ENCODE measurements at regions of chr7 and their contacts with region 1.

Region 1: GRCh38 chr7:112495810-112496462 is 15.1 kb downstream of the LSMEM1 start:
- DNase-seq: no peak
- H3K4me3 ChIP-seq: no peak overlapping the region
- H3K27ac ChIP-seq: no peak overlapping the region
- H3K27me3 ChIP-seq: no peaks in the 10 kb centered on the region
- CTCF ChIP-seq: peak; percentile 65

Region 2: DNA sequence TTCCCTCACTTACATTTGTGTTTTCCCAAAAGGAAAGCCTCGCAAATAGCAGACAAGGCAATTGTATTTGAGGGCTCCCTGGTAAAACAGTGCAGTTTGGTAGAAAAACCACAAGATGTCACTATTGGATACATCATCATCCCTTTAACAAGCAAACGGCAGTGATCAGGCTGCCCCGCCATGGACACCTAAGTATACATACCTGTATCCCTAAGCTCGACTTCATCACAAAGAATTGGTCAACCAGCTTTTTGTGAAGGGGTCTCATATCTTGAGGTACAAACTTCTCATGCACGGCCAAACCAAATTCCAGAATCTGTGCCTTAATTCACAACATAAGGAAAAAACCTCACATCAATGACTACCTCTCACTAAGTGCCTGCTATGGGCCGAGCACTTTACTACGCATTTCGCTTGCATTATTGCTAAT is 754.1 kb before region 1 on chr7:
- CTCF ChIA-PET with region 1: interaction called, 28 read pairs
- POLR2A ChIA-PET with region 1: no interaction called
- DNase-seq: peak; percentile 45
- H3K4me3 ChIP-seq: no peak overlapping the region
- H3K27ac ChIP-seq: no peak overlapping the region
- H3K27me3 ChIP-seq: no peaks in the 10 kb centered on the region
- CTCF ChIP-seq: peak; percentile 77

Region 3: GRCh38 chr7:112481833-112482670 is 13.9 kb before region 1 on chr7:
- CTCF ChIA-PET with region 1: interaction called, 35 read pairs
- POLR2A ChIA-PET with region 1: no interaction called
- DNase-seq: no peak
- H3K4me3 ChIP-seq: no peak overlapping the region
- H3K27ac ChIP-seq: peak overlapping the region; percentile 69
- H3K27me3 ChIP-seq: no peaks in the 10 kb centered on the region
- CTCF ChIP-seq: no peak

Region 4: GRCh38 chr7:112566442-112567324 is 70.7 kb after region 1 on chr7:
- CTCF ChIA-PET with region 1: no interaction called
- POLR2A ChIA-PET with region 1: no interaction called
- DNase-seq: no peak
- H3K4me3 ChIP-seq: no peak overlapping the region
- H3K27ac ChIP-seq: no peak overlapping the region
- H3K27me3 ChIP-seq: no peaks in the 10 kb centered on the region
- CTCF ChIP-seq: no peak

Measured in AG04450 (cell line).